MCF 10A (cell line): ENCODE measurements at regions of chr1 and their contacts with region 1.

Region 1: GRCh38 chr1:68346188-68346808 is 103.5 kb downstream of the RPE65 start:
- DNase-seq: peak; percentile 35
- H3K4me3 Mint-ChIP-seq: no peak overlapping the region
- H3K27ac Mint-ChIP-seq: no peak overlapping the region
- H3K4me1 Mint-ChIP-seq: no peaks in the 10 kb centered on the region
- H3K27me3 Mint-ChIP-seq: peaks cover 8% of the 10 kb centered on the region
- CTCF ChIP-seq: peak; percentile 24

Region 2: DNA sequence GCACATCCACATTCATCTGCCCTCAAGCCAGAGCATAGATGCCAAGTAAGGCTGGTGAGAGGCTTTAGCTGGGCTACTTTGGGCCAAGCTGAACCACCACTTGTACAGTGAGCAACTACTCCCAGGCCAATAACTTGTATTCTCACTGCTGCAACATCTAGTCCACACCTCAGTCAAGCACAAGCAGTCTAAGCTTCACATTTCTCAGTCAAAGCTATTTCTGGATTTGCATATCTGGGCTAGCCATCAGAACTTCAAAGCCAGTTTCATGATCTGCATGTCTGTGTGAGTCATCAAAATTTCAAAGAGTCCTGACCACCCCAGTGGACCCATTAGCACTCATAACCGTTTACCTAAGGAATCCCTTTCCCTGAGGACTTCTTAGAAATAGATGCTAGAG is 218.1 kb before region 1 on chr1:
- CTCF ChIA-PET with region 1: interaction called, 599 read pairs
- POLR2A ChIA-PET with region 1: interaction called, 3 read pairs
- intact Hi-C with region 1: no loop called
- DNase-seq: peak; percentile 8
- H3K4me3 Mint-ChIP-seq: no peak overlapping the region
- H3K27ac Mint-ChIP-seq: no peak overlapping the region
- H3K4me1 Mint-ChIP-seq: no peaks in the 10 kb centered on the region
- H3K27me3 Mint-ChIP-seq: no peaks in the 10 kb centered on the region
- CTCF ChIP-seq: no peak

Region 3: DNA sequence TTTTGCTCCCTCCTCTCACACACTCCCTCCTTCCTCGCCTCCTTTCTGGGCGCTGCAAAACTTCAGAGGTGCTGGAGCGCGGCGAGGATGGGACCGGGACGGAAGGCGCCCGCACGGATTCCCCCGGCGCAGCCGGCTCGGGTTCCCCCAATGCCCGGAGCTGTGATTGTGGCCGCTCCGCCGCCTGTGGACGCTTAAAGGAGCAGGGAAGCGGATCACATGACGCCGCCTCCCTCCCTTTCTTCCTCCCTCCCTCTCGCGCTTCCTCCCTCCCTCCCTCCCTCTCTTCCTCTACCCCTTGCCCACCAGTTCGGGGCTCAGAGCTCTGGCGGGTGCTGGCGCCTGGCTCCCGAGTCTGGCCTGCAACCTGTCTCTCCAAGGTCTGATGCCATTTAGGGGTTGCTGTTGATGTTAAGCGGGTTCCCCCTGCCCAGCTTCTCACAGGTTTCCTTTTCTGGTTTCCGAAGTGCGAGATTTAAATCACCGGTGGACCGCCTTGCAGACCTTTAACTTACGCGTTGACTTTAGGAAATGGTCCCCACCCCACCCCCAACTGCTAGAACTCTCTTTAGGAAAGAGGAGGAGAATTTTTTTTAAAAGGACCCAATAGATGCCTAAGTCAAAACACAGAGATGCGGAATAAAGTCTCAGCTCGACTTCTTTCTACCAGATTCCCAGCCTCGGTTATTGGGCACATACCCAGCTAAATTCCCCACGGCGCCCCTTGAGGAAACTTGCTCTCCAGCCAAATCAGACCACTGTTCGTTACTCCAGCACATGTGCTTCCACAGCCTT is 113.7 kb before region 1 on chr1 and contains the start of gene WLS:
- CTCF ChIA-PET with region 1: interaction called, 13 read pairs
- POLR2A ChIA-PET with region 1: interaction called, 3 read pairs
- intact Hi-C with region 1: loop called (anchors 1 kb)
- DNase-seq: peak; percentile 72
- H3K4me3 Mint-ChIP-seq: peak within 1 kb of the TSS; percentile 91
- H3K27ac Mint-ChIP-seq: peak within 1 kb of the TSS; percentile 42
- H3K4me1 Mint-ChIP-seq: peaks cover 19% of the 10 kb centered on the region
- H3K27me3 Mint-ChIP-seq: no peaks in the 10 kb centered on the region
- CTCF ChIP-seq: no peak
- total RNA-seq, gene WLS: 34.7 and 37.8 TPM in 2 replicates

Region 4: GRCh38 chr1:68358439-68358838 is 12.1 kb after region 1 on chr1:
- CTCF ChIA-PET with region 1: interaction called, 21 read pairs
- POLR2A ChIA-PET with region 1: no interaction called
- intact Hi-C with region 1: no loop called
- DNase-seq: no peak
- H3K4me3 Mint-ChIP-seq: no peak overlapping the region
- H3K27ac Mint-ChIP-seq: no peak overlapping the region
- H3K4me1 Mint-ChIP-seq: peaks cover 13% of the 10 kb centered on the region
- H3K27me3 Mint-ChIP-seq: no peaks in the 10 kb centered on the region
- CTCF ChIP-seq: no peak

Region 5: GRCh38 chr1:68384321-68384813 is 38.1 kb after region 1 on chr1:
- CTCF ChIA-PET with region 1: interaction called, 8 read pairs
- POLR2A ChIA-PET with region 1: no interaction called
- intact Hi-C with region 1: loop called (anchors 1 kb)
- DNase-seq: peak; percentile 98
- H3K4me3 Mint-ChIP-seq: no peak overlapping the region
- H3K27ac Mint-ChIP-seq: peak overlapping the region; percentile 40
- H3K4me1 Mint-ChIP-seq: peaks cover 45% of the 10 kb centered on the region
- H3K27me3 Mint-ChIP-seq: no peaks in the 10 kb centered on the region
- CTCF ChIP-seq: peak; percentile 16